Left ventricle myocardium inferior (tissue), 1 donor: ENCODE measurements at regions of chr11 and their contacts with region 1.

Region 1: DNA sequence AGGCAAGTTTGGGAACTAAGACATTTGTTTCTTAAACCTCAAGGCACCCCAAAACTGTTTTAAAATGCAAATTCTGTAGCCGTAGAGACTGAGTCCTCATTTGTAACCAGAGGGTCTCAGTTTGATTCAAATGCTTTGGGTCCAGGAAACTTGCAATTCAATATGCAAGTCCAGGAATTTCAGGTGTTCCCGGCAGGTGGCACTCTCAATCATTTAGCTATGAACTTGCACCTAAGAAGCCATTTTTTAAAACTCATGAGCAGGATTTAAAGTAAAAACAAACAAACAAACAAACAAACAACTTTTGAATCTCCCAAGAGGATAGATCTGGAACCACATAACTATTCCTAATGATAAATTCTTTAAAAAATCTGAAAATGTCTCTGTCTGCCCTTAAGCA is 8.7 kb upstream of the ABTB2 start:
- DNase-seq: no peak
- H3K4me3 ChIP-seq: no peak overlapping the region
- H3K27ac ChIP-seq: no peak overlapping the region
- H3K4me1 ChIP-seq: no peaks in the 10 kb centered on the region
- H3K27me3 ChIP-seq: peaks cover 20% of the 10 kb centered on the region
- CTCF ChIP-seq: peak; percentile 48

Region 2: GRCh38 chr11:33996498-33997454 is 369.7 kb before region 1 on chr11:
- intact Hi-C with region 1: loop called (anchors 10 kb)
- DNase-seq: peak; percentile 25
- H3K4me3 ChIP-seq: no peak overlapping the region
- H3K27ac ChIP-seq: no peak overlapping the region
- H3K4me1 ChIP-seq: no peaks in the 10 kb centered on the region
- H3K27me3 ChIP-seq: peaks cover 17% of the 10 kb centered on the region
- CTCF ChIP-seq: peak; percentile 91

Region 3: GRCh38 chr11:34468209-34468841 is 101.8 kb after region 1 on chr11:
- intact Hi-C with region 1: loop called (anchors 10 kb)
- DNase-seq: no peak
- H3K4me3 ChIP-seq: no peak overlapping the region
- H3K27ac ChIP-seq: no peak overlapping the region
- H3K4me1 ChIP-seq: no peaks in the 10 kb centered on the region
- H3K27me3 ChIP-seq: no peaks in the 10 kb centered on the region
- CTCF ChIP-seq: peak; percentile 66